ENCODE measurements at regions of chr5 and their contacts with region 1.

Region 1: DNA sequence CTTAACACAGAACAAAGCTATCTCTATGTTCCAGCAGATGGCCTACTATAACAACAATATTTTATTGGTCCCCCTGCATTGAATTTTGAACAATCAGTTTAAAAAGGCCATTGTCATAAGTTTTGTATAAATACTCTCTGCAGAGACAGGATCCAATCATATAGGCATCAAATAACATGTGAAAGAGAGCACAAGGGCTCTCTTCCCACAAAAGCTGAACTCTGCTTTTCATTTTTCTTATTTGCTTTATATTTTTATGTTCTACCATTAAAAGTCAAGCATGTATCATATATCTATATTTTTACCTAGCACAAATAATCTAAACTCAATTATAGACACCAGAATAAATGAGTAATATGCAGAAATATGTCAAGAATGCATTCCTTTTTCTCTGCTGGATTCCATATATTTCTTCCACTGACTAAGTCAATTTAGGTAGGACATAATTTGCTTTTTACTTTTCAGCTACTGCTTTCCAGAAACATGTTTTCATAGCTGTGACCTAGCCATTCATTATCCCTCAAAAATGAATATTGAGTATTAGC is 143.6 kb downstream of the CDH9 start:
- DNase-seq: no peak
- ATAC-seq: no peak

Region 2: DNA sequence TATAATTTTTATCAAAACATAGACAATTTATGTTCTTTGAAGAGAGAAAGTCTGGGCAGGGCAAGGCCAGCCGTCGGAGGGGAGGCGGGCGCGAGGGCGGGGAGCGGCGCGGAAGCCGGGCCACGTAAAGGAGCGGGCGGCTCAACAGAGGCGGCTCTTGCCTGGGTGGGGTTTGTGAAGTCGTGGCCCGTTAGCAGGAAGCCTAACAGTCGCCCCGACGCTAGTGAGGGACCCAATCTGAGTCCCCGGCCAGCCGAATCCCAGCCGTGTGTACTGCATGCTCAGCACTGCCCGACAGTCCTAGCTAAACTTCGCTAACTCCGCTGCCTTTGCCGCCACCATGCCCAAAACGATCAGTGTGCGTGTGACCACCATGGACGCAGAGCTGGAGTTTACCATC is 985.6 kb before region 1 on chr5:
- intact Hi-C with region 1: loop called (anchors 5 kb)
- DNase-seq: no peak
- ATAC-seq: peak; percentile 26

Measured in sciatic nerve (tissue), 2 donors.